ENCODE measurements at regions of chr3 and their contacts with region 1.

Region 1: GRCh38 chr3:97835761-97836160 is 13.9 kb downstream of the CRYBG3 start:
- DNase-seq: no peak
- ATAC-seq: no peak
- H3K4me3 ChIP-seq: no peak overlapping the region
- H3K27ac ChIP-seq: no peak overlapping the region
- H3K4me1 ChIP-seq: no peaks in the 10 kb centered on the region
- H3K27me3 ChIP-seq: no peaks in the 10 kb centered on the region
- CTCF ChIP-seq: no peak
- POLR2A ChIP-seq: no peak
- RAD21 ChIP-seq: no peak

Region 2: DNA sequence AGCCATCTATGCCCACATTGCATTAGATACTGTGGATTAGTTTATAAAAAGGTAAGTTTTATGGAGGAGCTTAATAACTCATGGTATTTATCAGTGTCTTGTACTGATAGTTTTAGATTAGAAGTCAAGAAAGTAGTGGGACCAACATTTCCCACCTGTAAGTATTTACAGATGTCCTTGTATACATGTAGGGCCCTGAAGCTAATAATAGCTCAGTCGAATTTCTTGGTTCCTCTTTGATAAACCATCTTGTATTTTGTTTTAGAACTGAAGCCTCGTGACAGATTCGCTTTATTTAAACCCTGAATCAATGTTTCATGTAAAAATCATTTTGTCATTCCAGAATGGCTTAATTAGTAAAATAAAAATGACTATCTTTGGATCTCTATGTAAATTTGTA is 59.5 kb after region 1 on chr3:
- CTCF ChIA-PET with region 1: no interaction called
- POLR2A ChIA-PET with region 1: no interaction called
- RAD21 ChIA-PET with region 1: no interaction called
- intact Hi-C with region 1: loop called (anchors 10 kb)
- DNase-seq: no peak
- ATAC-seq: no peak
- H3K4me3 ChIP-seq: no peak overlapping the region
- H3K27ac ChIP-seq: no peak overlapping the region
- H3K4me1 ChIP-seq: no peaks in the 10 kb centered on the region
- H3K27me3 ChIP-seq: no peaks in the 10 kb centered on the region
- CTCF ChIP-seq: no peak
- POLR2A ChIP-seq: no peak
- RAD21 ChIP-seq: no peak

Measured in HCT116 (cell line).